OCI-LY7 (cell line): ENCODE measurements at regions of chr7 and their contacts with region 1.

Region 1: DNA sequence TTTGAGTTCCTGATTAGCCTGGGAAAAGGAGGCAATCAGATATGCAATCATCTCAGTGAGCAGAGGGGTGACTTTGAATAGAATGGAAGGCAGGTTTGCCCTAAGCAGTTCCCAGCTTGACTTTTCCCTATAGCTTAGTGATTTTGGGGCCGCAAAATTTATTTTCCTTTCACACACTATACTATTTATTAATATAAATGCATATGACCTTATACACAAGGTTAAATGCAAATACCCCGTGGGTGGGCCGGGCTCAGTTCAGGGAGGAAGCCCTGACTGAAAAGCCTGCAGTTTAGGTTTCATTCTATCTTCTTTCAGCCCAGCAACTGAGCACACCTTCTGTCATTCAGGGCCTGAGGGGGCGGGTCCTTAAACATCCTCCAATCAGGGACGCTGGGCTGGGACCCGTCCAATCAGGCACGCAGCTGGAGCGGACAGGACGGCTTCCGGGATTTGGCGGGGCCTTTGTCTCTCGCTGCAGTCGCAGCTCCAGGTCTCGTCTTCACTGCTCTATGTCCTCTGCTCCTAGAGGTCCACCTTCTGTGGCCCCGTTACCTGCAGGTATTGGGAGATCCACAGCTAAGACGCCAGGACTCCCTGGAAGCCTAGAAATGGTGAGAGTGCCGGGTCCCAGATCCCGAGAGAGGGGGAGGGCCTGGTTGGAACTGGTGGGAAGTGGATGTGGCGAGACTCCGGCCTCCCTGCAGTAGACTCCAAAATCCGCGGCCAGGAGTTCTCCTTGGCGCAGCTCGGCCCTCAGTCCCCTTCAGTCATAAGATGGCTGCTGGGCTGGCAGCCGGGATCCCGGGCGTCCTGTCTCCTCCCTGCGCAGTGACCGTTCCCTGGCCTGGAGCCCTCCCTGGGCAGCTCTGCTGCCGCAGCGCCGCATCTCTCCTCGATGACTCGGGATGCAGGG is at the start of gene ZNF273:
- DNase-seq: peak; percentile 96
- H3K4me3 ChIP-seq: peak within 1 kb of the TSS; percentile 86
- H3K27ac ChIP-seq: peak within 1 kb of the TSS; percentile 54
- H3K4me1 ChIP-seq: peaks cover 49% of the 10 kb centered on the region
- CTCF ChIP-seq: no peak
- total RNA-seq, gene ZNF273: 19.0 and 22.8 TPM in 2 replicates

Region 2: DNA sequence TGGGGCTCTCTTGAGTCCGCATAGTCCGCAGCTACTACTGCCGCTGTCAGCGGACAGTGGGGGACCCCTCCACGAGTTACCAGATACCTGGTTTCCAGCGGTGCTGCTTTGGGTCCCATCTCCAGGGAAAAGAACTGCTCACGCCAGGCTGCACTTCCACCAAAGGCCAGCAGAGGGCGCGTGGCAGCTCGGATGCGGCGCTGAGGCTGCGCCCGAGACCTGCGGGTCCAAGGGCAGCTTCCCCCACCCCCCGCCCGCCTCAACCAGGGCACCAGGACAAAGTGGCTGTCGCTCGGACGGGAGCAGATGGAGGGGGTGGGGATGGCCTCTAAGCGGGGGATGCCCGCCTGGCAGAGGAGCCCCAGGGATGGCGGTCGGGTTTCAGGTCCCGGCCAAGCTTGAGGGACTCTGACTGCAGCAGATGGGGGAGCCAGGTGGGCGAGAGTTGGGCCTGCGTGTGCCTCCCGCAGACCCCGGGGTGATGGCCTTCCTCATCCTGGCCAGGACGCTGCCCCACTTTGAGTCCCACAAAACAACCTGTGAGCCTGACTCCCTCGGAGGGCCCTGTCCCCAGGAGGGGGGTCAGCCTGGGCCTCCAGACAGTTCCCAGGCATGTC is 719.8 kb before region 1 on chr7:
- CTCF ChIA-PET with region 1: no interaction called
- POLR2A ChIA-PET with region 1: no interaction called
- intact Hi-C with region 1: no loop called
- DNase-seq: peak; percentile 10
- H3K4me3 ChIP-seq: no peak overlapping the region
- H3K27ac ChIP-seq: no peak overlapping the region
- H3K4me1 ChIP-seq: no peaks in the 10 kb centered on the region
- CTCF ChIP-seq: peak; percentile 77

Region 3: DNA sequence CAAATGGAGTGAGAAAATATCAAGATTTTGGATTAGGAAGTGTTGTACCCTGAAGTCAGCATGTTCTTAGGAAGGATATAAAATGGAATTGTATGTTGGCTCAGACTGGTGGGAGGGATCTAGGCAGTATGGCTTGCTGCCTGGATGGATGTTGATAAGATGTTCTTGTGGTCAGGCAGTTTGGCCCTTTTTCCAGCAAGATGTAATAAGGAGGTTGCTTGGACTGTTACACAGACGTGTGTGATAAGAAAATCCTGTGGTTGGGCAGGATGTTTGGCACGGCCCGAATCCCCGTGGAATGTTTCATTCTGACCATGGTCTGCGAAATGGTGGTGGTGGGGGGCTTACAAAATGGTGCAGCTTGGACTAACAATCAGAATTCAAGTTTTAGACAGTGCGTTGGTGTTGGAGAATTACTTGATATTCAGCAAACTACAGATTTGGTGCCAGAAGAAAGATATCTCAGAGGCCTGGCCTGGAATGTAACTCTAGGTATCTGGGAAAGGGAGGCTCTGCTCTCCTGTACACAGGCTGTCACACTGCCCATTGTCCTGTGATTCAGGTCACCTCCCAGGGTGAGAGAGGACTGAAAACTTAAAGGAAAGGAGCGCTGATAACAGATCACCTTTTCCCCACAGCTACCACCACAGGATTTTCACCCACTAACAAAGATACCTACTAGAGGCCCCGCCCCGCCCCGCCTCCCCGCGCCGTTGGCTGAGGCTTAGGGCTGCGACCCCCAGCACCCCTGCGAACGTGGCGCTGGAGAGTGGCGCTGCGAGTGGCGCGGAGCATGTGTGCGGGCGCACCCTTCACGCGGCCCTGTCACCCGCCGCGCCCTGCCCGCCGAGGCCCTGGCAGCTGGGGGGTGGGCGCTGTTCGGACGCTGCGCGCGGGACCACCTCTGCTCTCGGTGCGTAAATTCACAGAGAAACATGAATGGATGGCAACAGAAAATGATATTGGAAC is 320.9 kb before region 1 on chr7:
- CTCF ChIA-PET with region 1: no interaction called
- POLR2A ChIA-PET with region 1: no interaction called
- intact Hi-C with region 1: no loop called
- DNase-seq: no peak
- H3K4me3 ChIP-seq: no peak overlapping the region
- H3K27ac ChIP-seq: no peak overlapping the region
- H3K4me1 ChIP-seq: no peaks in the 10 kb centered on the region
- CTCF ChIP-seq: no peak

Region 4: GRCh38 chr7:64636386-64636785 is 266.7 kb before region 1 on chr7:
- CTCF ChIA-PET with region 1: no interaction called
- POLR2A ChIA-PET with region 1: no interaction called
- intact Hi-C with region 1: loop called (anchors 5 kb)
- DNase-seq: peak; percentile 69
- H3K4me3 ChIP-seq: no peak overlapping the region
- H3K27ac ChIP-seq: no peak overlapping the region
- H3K4me1 ChIP-seq: no peaks in the 10 kb centered on the region
- CTCF ChIP-seq: peak; percentile 86

Region 5: DNA sequence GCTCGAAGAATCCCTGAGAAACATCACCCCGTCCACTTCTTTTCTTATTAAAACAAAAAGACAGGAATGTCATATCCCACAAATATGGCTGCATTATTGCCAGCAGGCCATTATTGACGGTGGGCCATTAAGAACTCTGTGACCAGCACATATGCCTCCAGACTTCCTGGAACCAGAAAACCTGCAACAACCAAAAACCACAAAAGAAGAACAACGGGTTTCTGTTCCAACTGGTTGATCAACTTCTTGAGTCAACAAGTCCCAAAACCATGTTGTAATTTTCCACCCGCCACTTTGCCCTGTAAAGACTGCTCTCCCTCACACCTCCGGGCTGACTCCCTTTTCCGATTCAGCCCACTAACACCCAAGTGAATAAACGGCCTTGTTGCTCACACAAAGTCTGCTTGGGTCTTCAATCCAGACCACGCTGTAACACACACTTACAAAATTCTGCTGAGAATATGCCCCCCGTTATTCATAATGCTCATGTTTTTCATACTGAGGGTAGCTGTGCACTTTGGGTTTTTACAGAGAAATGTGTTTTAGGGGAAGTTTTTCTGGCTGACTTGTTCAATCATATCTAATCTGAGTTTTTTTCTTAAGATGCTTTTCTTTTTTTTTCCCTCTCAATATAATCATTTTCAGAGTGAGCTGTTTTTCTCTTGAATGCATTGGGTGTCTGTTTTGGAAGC is 216.4 kb before region 1 on chr7:
- CTCF ChIA-PET with region 1: no interaction called
- POLR2A ChIA-PET with region 1: no interaction called
- intact Hi-C with region 1: loop called (anchors 5 kb)
- DNase-seq: peak; percentile 93
- H3K4me3 ChIP-seq: peak overlapping the region; percentile 57
- H3K27ac ChIP-seq: peak overlapping the region; percentile 99
- H3K4me1 ChIP-seq: peaks cover 98% of the 10 kb centered on the region
- CTCF ChIP-seq: no peak

Region 6: GRCh38 chr7:65037740-65038678 is 134.9 kb after region 1 on chr7:
- CTCF ChIA-PET with region 1: interaction called, 3 read pairs
- POLR2A ChIA-PET with region 1: no interaction called
- intact Hi-C with region 1: loop called (anchors 2 kb)
- DNase-seq: peak; percentile 94
- H3K4me3 ChIP-seq: peak overlapping the region; percentile 86
- H3K27ac ChIP-seq: peak overlapping the region; percentile 54
- H3K4me1 ChIP-seq: peaks cover 26% of the 10 kb centered on the region
- CTCF ChIP-seq: peak; percentile 59